HCT116 (cell line): ENCODE measurements at regions of chr2 and their contacts with region 1.

Region 1: DNA sequence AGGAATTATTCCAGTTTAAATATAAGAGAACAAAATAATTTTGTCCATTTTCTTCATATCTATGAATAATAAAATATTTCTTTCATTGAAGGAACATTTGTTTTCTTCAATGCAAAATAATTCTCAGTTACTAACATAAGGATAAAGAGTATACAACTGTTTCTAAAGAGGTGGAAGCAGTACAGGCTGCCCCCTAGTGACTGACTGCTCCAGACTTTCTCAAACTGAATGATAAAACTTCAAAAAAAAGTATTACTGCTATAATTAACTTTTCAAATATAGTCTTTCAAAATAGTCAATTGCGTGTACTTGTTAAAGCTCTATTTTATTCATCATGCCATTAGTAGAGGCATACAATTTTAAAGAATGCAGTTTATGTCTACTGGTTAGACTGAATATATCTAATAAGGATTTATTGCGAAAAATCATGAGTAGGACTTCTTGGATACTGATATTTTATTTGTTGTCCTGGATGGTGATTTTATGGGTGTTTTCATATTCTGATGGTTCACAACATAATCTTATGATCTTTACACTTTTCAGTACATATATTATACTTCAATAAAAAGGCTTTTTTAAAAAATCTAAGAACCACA is 100.1 kb downstream of the WDPCP start:
- DNase-seq: peak; percentile 15
- ATAC-seq: 0 out of 2 replicates have a peak, but pooled peaks have one; percentile 62
- H3K4me3 ChIP-seq: no peak overlapping the region
- H3K27ac ChIP-seq: no peak overlapping the region
- H3K4me1 ChIP-seq: no peaks in the 10 kb centered on the region
- H3K27me3 ChIP-seq: no peaks in the 10 kb centered on the region
- CTCF ChIP-seq: peak; percentile 41 to 76 (median 72); a peak in 5 of 6 replicates
- POLR2A ChIP-seq: no peak
- RAD21 ChIP-seq: peak; percentile 56

Region 2: GRCh38 chr2:62939735-62940491 is 548.3 kb before region 1 on chr2:
- CTCF ChIA-PET with region 1: no interaction called
- POLR2A ChIA-PET with region 1: no interaction called
- RAD21 ChIA-PET with region 1: no interaction called
- intact Hi-C with region 1: no loop called
- DNase-seq: no peak
- ATAC-seq: no peak
- H3K4me3 ChIP-seq: no peak overlapping the region
- H3K27ac ChIP-seq: no peak overlapping the region
- H3K4me1 ChIP-seq: no peaks in the 10 kb centered on the region
- H3K27me3 ChIP-seq: no peaks in the 10 kb centered on the region
- CTCF ChIP-seq: no peak
- POLR2A ChIP-seq: no peak
- RAD21 ChIP-seq: no peak

Region 3: DNA sequence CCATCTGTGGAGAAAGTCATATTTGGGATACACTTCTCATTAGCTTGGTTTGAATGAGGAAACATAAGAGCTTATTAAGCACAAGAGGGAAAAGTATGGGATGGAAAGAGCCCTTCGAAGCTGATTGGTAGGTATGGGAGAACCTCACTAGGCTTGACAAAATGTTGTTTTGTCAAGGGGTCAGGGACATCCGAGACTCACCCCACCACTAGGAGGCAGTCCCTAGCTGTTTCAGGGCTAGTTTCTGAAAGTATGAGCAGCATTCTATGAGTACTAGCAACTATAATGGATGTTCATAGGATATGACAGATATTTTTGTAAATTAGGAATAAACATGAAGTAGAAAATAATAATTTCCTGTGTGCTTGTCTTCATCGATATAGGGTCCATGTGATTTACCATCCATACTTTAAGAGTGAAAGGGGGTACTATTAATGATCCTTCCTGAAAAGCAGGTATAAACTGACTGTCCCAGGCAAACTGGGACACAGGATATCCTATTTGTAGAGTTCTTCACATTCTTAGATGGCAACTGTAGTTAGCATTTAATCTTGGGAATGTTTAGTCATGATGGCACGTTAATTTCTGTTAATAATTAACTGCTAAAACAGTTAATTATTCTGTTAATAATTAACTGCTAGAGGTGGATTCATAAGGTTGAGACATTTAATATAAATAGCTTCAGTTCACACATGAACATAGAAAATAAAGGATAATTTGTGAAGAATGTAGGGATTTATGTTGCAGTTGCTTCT is 409.2 kb before region 1 on chr2:
- CTCF ChIA-PET with region 1: interaction called, 3 read pairs
- POLR2A ChIA-PET with region 1: no interaction called
- RAD21 ChIA-PET with region 1: no interaction called
- intact Hi-C with region 1: loop called (anchors 10 kb)
- DNase-seq: peak; percentile 23
- ATAC-seq: peak; percentile 89
- H3K4me3 ChIP-seq: no peak overlapping the region
- H3K27ac ChIP-seq: no peak overlapping the region
- H3K4me1 ChIP-seq: no peaks in the 10 kb centered on the region
- H3K27me3 ChIP-seq: no peaks in the 10 kb centered on the region
- CTCF ChIP-seq: peak; percentile 31 to 74 (median 73); a peak in 4 of 6 replicates
- POLR2A ChIP-seq: no peak
- RAD21 ChIP-seq: peak; percentile 70